Ovary (tissue), 10 donors: ENCODE measurements at regions of chr19 and their contacts with region 1.

Region 1: DNA sequence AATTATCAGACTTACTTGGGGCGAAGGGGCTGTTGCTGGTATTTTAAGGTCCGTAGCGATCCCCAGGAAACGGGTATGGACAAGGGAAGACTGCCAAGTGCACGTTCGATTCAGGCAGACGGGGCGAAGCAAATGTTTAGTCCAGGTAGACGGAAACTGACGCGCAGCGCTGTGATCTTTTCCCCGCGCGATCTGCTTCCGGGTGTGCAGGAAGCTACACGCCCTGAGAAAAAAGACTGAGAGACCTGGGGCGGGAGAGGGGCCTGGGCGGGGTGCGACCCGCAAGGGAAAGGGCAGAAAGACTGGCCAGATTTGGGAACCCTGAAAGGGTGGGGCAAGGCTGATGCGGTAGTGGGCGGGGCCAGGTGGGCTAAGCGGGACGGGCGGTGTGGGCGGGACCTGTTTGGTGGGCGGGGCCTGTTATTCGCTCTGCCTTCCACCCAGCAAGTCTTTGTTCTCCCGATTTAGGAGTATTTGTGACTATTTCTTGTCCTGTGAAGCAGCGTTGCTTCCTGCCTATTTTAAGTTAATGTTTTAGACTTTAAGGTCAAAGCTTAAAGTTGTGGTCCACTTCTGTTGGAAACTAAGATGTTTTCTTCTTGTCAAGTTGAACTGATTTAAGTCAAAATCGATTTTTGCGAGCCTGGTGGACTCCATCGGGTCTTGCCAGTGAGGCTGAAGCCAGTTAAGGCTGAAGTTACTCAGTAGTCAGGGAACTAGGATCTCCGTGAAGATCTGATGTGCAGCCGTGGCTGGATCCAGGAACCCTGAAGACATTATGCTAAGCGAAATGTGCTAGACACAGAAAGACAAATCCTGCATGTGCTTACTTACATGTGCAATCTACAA is at the start of gene ZNF836:
- DNase-seq: peak; percentile 91 to 96 (median 94)
- H3K4me3 ChIP-seq: peak within 1 kb of the TSS; percentile 77
- H3K27ac ChIP-seq: peak within 1 kb of the TSS; percentile 70 to 80
- H3K4me1 ChIP-seq: peaks cover 3% of the 10 kb centered on the region
- H3K27me3 ChIP-seq: no peaks in the 10 kb centered on the region
- CTCF ChIP-seq: no peak
- EP300 ChIP-seq: no peak
- POLR2A ChIP-seq: no peak
- total RNA-seq, gene ZNF836: 19.0 to 38.1 (median 26.3) TPM

Region 2: GRCh38 chr19:52139252-52140031 is 32.1 kb before region 1 on chr19 and contains the start of gene ZNF616:
- intact Hi-C with region 1: loop called in 1 of 4 experiments (anchors 2 kb)
- DNase-seq: peak; percentile 98 to 99 (median 98)
- H3K4me3 ChIP-seq: peak within 1 kb of the TSS; percentile 98
- H3K27ac ChIP-seq: peak within 1 kb of the TSS; percentile 58 to 85
- H3K4me1 ChIP-seq: no peaks in the 10 kb centered on the region
- H3K27me3 ChIP-seq: no peaks in the 10 kb centered on the region
- CTCF ChIP-seq: peak; percentile 65 to 77 (median 75)
- EP300 ChIP-seq: no peak
- POLR2A ChIP-seq: peak; percentile 76
- total RNA-seq, gene ZNF616: 4.5 to 22.3 (median 14.1) TPM

Region 3: DNA sequence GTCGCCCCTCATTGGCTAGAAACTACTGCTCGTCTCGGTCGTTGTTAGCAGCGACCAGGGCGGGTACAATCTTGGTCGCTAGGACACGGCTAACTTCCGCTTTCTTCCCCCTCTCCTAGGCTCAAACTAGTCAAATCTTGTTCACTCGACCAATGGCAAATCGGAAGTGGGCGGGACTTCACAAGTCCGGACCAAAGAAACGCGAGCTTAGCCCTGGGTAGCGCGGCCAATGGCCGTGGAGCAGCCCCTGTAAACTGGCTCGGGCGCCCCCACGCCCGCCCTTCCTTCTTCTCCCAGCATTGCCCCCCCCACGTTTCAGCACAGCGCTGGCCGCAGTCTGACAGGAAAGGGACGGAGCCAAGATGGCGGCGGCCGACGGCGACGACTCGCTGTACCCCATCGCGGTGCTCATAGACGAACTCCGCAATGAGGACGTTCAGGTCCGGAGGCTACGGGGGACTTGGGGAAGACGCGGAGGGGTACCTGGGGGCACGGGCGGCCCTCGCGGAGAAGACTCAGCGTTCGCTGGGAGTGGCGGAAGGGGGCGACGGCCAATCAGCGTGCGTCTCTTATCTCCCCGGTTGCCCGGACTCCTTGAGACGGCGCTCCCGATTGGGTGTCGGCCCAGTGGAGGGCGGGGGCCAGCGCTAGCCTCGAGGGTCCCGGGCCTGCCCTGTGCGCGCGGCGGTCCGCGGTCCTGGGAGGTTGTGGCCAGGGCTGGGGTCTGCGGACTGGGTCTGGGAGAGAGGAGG is 18.4 kb after region 1 on chr19 and contains the start of gene PPP2R1A:
- intact Hi-C with region 1: loop called in 1 of 4 experiments (anchors 2 kb)
- DNase-seq: peak; percentile 99
- H3K4me3 ChIP-seq: peak within 1 kb of the TSS; percentile 57
- H3K27ac ChIP-seq: peak within 1 kb of the TSS; percentile 88 to 96
- H3K4me1 ChIP-seq: peaks cover 12% of the 10 kb centered on the region
- H3K27me3 ChIP-seq: no peaks in the 10 kb centered on the region
- CTCF ChIP-seq: peak in 2 of 3 donors; percentile 11 to 48
- EP300 ChIP-seq: peak; percentile 13
- POLR2A ChIP-seq: peak; percentile 95
- total RNA-seq, gene PPP2R1A: 133 to 408 (median 303) TPM

Region 4: DNA sequence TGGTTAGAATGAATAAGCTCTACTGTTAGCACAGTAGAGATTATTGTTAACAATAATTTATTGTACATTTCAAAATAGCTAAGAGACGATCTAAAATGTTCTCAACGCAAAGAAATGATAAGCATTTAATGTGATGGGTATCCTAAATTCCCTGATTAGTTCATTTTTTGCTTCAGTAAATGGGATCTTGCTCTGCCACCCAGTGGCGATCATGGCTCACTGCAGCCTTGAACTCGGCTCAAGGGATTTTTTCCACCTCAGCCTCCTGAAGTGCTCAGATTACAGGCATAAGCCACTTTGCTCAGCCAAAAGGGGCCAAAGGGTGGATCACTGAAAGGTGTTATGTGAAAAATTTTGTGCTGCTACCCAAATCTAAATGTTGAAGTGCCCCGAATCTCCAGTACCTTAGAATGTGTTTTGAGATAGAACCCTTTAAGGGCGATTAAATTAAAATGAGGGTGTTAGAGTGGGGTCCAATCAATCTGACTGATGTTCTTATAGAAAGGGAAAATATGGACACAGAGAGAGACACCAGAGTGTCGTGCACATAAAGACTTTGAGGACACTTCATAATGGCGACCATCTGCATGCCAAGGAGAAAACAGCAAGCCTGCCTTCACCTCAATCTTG is 66.3 kb after region 1 on chr19:
- intact Hi-C with region 1: no loop called
- DNase-seq: peak; percentile 42 to 70 (median 66)
- H3K4me3 ChIP-seq: no peak overlapping the region
- H3K27ac ChIP-seq: no peak overlapping the region
- H3K4me1 ChIP-seq: no peaks in the 10 kb centered on the region
- H3K27me3 ChIP-seq: no peaks in the 10 kb centered on the region
- CTCF ChIP-seq: peak; percentile 70 to 83 (median 72)
- EP300 ChIP-seq: no peak
- POLR2A ChIP-seq: no peak